ENCODE measurements at regions of chr16 and their contacts with region 1.

Region 1: GRCh38 chr16:2905431-2906387 is 6.0 kb upstream of the FLYWCH1 start:
- DNase-seq: peak; percentile 98
- H3K4me3 Mint-ChIP-seq: peak overlapping the region; percentile 87
- H3K27ac Mint-ChIP-seq: peak overlapping the region; percentile 91
- H3K4me1 Mint-ChIP-seq: peaks cover 28% of the 10 kb centered on the region
- H3K27me3 Mint-ChIP-seq: peaks cover 6% of the 10 kb centered on the region

Region 2: DNA sequence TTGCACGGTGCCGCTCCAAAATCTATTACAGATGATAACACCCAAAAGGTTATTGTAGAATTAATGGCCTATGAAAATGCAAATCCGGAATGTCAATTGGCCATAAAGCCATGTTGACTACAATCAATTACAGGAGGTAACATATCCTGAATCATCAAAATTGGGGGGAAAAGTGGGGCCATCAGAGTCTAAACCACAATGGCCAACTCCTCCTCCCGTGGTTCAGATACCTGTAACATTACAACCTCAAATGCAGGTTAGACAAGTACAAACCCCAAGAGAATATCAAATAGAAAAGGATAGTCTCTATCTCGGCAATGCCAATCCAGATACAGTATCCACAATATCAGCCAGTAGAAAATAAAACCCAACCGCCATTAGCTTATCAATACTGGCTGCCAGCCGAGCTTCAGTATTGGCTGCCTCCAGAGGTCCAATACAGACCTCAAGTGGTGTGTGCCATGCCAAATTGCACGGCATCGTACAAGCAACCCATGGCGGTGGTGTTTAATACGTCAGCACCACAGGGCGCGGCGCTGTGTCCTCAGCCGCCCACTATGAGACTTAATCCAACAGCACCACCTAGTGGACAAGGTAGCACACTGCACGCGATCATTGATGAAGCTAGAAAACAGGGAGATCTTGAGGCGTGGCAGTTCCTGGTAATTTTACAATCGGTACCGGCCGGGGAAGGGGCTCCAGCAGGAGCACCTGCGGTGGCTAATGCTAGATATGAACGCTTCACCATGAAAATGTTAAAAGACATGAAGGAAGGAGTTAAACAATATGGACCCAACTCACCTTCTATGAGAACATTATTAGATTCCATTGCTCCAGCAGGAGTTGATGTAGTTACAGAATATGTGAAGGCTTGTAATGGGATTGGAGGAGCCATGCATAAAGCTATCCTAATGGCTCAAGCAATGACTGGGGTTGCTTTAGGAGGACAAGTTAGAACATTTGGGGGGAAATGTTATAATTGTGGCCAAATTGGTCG is 21.2 kb after region 1 on chr16:
- CTCF ChIA-PET with region 1: interaction called, 31 read pairs
- POLR2A ChIA-PET with region 1: interaction called, 4 read pairs
- DNase-seq: peak; percentile 90
- H3K4me3 Mint-ChIP-seq: no peak overlapping the region
- H3K27ac Mint-ChIP-seq: no peak overlapping the region
- H3K4me1 Mint-ChIP-seq: peaks cover 17% of the 10 kb centered on the region
- H3K27me3 Mint-ChIP-seq: no peaks in the 10 kb centered on the region